Calu3 (cell line): ENCODE measurements at regions of chr22 and their contacts with region 1.

Region 1: GRCh38 chr22:37544955-37545699 is 15.2 kb upstream of the CDC42EP1 start:
- DNase-seq: peak; percentile 89
- H3K4me3 Mint-ChIP-seq: peak overlapping the region; percentile 46
- H3K27ac Mint-ChIP-seq: peak overlapping the region; percentile 30
- H3K4me1 Mint-ChIP-seq: peaks cover 63% of the 10 kb centered on the region
- H3K27me3 Mint-ChIP-seq: no peaks in the 10 kb centered on the region
- CTCF ChIP-seq: peak; percentile 75

Region 2: DNA sequence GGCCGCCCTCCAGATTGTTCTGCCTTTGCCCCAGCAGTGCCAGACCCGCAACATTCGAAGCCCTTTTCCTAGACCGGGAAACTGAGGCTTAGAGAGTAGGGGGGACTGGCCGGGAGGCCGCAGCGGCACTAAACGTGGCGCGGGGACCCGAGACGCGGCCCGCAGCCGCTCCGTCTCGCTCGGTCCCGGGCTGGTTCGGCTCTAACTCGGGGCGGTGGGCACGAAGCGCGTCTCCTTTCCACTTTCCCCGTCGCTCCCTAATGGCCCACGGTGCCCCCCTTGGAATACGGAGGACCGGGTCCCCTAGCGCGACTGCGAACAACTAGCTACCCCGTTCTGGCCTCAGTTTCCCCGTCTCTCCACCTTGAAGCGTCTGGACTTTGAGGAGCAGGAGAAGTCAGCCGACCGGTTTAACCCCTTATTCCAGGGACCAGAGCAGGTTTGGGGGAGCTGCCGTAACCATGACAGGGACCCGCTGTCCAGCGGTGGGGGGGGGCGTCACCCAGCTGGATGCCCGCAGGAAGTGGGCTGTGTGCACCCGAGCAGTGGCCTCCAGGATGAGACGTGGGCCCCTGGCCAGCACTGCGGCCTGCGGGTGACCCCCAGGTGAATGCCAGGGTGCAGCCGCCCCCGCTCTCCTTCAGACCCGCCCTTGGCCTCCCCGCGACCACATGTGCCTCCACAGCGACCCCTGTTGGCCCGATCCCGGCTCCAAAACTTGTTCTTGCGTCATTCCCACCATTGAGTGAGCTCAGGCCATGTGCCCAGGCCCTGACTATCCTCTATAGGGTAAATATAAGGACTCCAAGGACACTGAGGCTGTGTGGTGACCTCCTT is 16.3 kb after region 1 on chr22:
- CTCF ChIA-PET with region 1: interaction called, 46 read pairs
- intact Hi-C with region 1: no loop called
- DNase-seq: peak; percentile 97
- H3K4me3 Mint-ChIP-seq: peak overlapping the region; percentile 87
- H3K27ac Mint-ChIP-seq: peak overlapping the region; percentile 100
- H3K4me1 Mint-ChIP-seq: peaks cover 82% of the 10 kb centered on the region
- H3K27me3 Mint-ChIP-seq: no peaks in the 10 kb centered on the region
- CTCF ChIP-seq: peak; percentile 90

Region 3: GRCh38 chr22:37566903-37567820 is 22.0 kb after region 1 on chr22:
- CTCF ChIA-PET with region 1: interaction called, 51 read pairs
- intact Hi-C with region 1: loop called (anchors 1 kb)
- DNase-seq: peak; percentile 96
- H3K4me3 Mint-ChIP-seq: peak overlapping the region; percentile 87
- H3K27ac Mint-ChIP-seq: peak overlapping the region; percentile 99
- H3K4me1 Mint-ChIP-seq: peaks cover 98% of the 10 kb centered on the region
- H3K27me3 Mint-ChIP-seq: no peaks in the 10 kb centered on the region
- CTCF ChIP-seq: peak; percentile 97

Region 4: GRCh38 chr22:37608477-37609239 is 63.5 kb after region 1 on chr22 and contains the start of gene GGA1:
- CTCF ChIA-PET with region 1: interaction called, 12 read pairs
- intact Hi-C with region 1: no loop called
- DNase-seq: peak; percentile 95
- H3K4me3 Mint-ChIP-seq: peak within 1 kb of the TSS; percentile 89
- H3K27ac Mint-ChIP-seq: peak within 1 kb of the TSS; percentile 87
- H3K4me1 Mint-ChIP-seq: peaks cover 10% of the 10 kb centered on the region
- H3K27me3 Mint-ChIP-seq: no peaks in the 10 kb centered on the region
- CTCF ChIP-seq: no peak
- total RNA-seq, gene GGA1: 89.8 and 95.3 TPM in 2 replicates